GM12878 (cell line): ENCODE measurements at regions of chr17 and their contacts with region 1.

Region 1: DNA sequence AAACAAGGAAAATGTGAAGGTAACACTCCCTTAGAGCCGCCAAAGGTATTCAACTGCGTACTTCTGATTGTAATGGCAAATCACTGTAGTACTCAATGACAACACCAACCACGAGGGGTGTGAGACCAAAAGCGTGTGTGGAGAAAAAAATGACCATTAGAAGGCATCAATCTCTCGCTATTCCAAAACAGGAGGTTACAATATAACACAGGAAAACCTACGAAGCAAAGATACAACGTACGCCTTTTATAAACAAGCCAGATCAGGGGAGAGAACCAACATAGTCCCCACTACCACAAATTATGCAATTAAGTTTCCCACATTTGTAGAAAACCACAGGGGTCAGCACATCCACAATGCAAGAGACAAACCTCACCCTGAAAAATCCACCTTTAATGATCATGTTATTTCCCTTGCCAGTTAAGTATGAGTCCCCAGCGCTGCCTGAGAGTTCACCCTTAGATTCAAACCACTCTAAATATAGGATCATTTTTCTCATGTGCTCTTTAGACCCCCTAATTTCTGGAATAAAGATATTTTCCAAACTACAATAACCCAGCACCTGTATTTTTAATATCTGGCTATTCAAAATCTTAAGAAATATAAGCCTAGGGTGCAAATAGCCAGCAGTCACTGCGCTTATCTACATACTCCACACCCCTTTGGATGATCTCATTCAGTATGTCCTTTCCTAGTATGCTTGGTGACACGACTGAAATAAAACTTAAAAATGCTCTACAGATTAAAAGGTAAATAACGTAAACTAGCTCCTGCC is 12.4 kb downstream of the TEX14 start:
- DNase-seq: peak; percentile 89
- ATAC-seq: peak; percentile 91
- H3K4me3 ChIP-seq: no peak overlapping the region
- H3K27ac ChIP-seq: 0 out of 2 replicates have a peak overlapping the region, but pooled peaks have one; percentile 33
- H3K4me1 ChIP-seq: peaks cover 11% of the 10 kb centered on the region
- H3K27me3 ChIP-seq: no peaks in the 10 kb centered on the region
- CTCF ChIP-seq: no peak
- EP300 ChIP-seq: peak in 1 of 2 experiments; percentile 64; a peak in 1 of 4 replicates
- POLR2A ChIP-seq: peak; percentile 94
- RAD21 ChIP-seq: no peak

Region 2: GRCh38 chr17:58624751-58625150 is 54.7 kb before region 1 on chr17:
- CTCF ChIA-PET with region 1: no interaction called
- POLR2A ChIA-PET with region 1: no interaction called
- RAD21 ChIA-PET with region 1: no interaction called
- SMC1A ChIA-PET with region 1: no interaction called
- in situ Hi-C with region 1: no loop called
- intact Hi-C with region 1: no loop called
- DNase-seq: no peak
- ATAC-seq: no peak
- H3K4me3 ChIP-seq: no peak overlapping the region; the same call in 1 of the 2 replicates
- H3K27ac ChIP-seq: no peak overlapping the region
- H3K4me1 ChIP-seq: peaks cover 28% of the 10 kb centered on the region
- H3K27me3 ChIP-seq: no peaks in the 10 kb centered on the region
- CTCF ChIP-seq: no peak
- EP300 ChIP-seq: no peak
- POLR2A ChIP-seq: no peak
- RAD21 ChIP-seq: no peak

Region 3: DNA sequence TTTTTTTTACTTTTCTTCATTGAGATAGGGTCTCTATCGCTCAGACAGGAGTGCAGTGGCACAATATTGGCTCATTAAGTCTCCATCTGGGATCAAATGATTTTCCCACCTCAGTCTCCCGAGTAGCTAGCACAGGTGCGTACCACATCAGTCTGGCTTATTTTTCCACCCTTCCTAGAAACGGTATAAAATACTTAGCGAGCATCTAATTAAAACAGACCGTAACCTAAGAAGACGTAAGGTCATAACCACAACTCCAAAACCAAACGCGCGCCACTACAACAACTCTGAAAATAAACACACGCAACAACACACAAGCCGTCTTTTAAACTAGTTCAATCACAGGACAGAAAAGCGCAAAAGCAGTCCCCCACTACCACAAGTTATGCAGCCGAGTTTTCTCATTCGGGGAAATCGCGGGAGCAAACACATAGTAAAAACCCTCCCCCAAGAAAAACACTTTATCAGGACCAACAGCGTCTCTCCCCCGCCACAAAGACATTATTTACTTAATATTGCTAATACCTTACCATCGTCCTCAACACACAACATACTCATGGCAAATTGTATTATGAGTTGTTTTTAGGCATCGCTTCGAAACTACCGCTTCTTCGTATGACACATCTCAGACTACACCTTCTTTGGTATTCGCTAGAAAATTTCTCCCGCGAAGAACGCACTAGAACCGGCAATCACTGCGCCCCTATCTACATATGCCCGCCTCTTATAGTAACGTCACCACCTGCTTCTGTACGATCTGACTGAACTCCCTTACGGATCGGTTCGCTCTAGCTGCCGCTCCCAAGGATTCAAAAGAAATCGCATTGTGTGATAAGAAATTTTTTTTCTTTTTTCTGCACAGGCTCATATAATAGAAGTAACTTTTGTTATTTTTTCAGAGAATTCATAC is 20.4 kb before region 1 on chr17:
- CTCF ChIA-PET with region 1: no interaction called
- POLR2A ChIA-PET with region 1: interaction called, 6 read pairs
- RAD21 ChIA-PET with region 1: no interaction called
- SMC1A ChIA-PET with region 1: no interaction called
- in situ Hi-C with region 1: no loop called
- intact Hi-C with region 1: loop called (anchors 1 kb)
- DNase-seq: peak; percentile 95
- ATAC-seq: peak; percentile 93
- H3K4me3 ChIP-seq: peak overlapping the region; percentile 44; the same call in 1 of the 2 replicates
- H3K27ac ChIP-seq: peak overlapping the region; percentile 77
- H3K4me1 ChIP-seq: no peaks in the 10 kb centered on the region
- H3K27me3 ChIP-seq: no peaks in the 10 kb centered on the region
- CTCF ChIP-seq: no peak
- EP300 ChIP-seq: no peak; a peak in 1 of 4 replicates
- POLR2A ChIP-seq: peak; percentile 98
- RAD21 ChIP-seq: peak; percentile 5; the same call in 1 of the 2 replicates

Region 4: DNA sequence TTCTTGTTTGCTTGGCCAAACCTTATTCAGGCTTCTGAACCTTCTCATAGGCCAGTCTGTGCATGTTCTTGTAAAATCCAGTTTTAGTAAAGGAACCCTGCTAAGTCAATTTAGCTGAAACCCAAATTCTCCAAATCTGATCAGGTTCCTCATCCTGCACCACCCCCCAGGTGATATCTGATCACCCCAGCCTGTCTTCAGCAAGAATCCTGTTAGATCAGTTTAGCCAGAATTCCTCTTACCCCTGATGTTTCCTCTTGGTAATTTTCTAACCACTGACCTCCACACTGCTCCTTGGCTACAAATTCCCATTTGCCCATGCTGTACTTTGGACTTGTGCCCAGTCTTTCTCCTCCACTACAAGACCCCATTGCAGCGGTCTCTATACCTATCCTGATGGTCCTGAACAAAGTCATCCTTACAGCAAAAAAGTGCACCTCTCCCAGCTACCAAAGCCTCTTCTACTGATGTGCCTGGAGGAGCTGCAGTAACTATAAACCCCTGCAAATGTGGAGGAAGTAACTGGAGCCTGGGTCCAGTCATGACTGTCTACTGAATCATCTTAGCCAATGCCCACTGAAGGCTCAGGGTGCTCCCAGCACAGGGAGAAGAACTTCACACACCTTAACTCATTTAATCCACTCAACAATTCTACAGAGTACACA is 11.4 kb before region 1 on chr17:
- CTCF ChIA-PET with region 1: interaction called, 3 read pairs
- POLR2A ChIA-PET with region 1: interaction called, 5 read pairs
- RAD21 ChIA-PET with region 1: no interaction called
- SMC1A ChIA-PET with region 1: interaction called, 12 read pairs
- in situ Hi-C with region 1: no loop called
- intact Hi-C with region 1: no loop called
- DNase-seq: no peak
- ATAC-seq: no peak
- H3K4me3 ChIP-seq: no peak overlapping the region
- H3K27ac ChIP-seq: no peak overlapping the region
- H3K4me1 ChIP-seq: no peaks in the 10 kb centered on the region
- H3K27me3 ChIP-seq: no peaks in the 10 kb centered on the region
- CTCF ChIP-seq: no peak
- EP300 ChIP-seq: no peak
- POLR2A ChIP-seq: no peak
- RAD21 ChIP-seq: no peak

Region 5: DNA sequence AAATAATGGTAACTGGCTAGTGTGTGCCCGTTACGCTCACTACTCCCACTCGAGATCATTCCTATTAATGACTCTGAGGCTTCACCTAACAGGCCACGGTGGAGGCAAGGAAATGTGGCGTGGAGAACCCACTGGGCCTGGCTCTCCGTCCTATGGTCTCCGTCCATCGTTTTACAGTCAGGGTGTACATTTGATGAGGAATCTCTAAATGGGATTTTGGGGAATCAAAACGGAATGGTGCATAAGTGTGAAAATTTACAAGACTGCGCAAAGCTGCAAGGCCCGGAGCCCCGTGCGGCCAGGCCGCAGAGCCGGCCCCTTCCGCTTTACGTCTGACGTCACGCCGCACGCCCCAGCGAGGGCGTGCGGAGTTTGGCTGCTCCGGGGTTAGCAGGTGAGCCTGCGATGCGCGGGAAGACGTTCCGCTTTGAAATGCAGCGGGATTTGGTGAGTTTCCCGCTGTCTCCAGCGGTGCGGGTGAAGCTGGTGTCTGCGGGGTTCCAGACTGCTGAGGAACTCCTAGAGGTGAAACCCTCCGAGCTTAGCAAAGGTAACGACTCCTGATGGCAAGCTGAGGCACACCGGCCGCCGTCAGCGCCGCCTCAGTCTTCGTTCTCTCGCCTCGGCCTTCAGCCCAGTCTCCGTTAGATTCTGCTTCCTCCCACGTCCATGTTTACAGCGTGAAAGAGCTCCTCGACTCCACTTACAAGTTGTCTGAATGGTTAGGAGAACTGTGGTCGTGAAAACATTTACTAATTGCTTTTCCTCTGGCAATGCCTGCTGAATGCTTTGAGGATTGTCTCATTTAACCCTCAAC is 13.0 kb after region 1 on chr17 and contains the start of gene RAD51C:
- CTCF ChIA-PET with region 1: interaction called, 5 read pairs
- POLR2A ChIA-PET with region 1: interaction called, 4 read pairs
- RAD21 ChIA-PET with region 1: interaction called, 6 read pairs
- SMC1A ChIA-PET with region 1: interaction called, 17 read pairs
- in situ Hi-C with region 1: no loop called
- intact Hi-C with region 1: no loop called
- DNase-seq: peak; percentile 67
- ATAC-seq: peak; percentile 98
- H3K4me3 ChIP-seq: peak within 1 kb of the TSS; percentile 66
- H3K27ac ChIP-seq: peak within 1 kb of the TSS; percentile 96
- H3K4me1 ChIP-seq: no peaks in the 10 kb centered on the region; the same call in none of the 2 replicates
- H3K27me3 ChIP-seq: no peaks in the 10 kb centered on the region
- CTCF ChIP-seq: no peak
- EP300 ChIP-seq: no peak; a peak in 1 of 4 replicates
- POLR2A ChIP-seq: peak; percentile 87
- RAD21 ChIP-seq: no peak
- polyA plus RNA-seq, gene RAD51C: 229 to 240 TPM

Region 6: GRCh38 chr17:58703137-58703972 is 23.9 kb after region 1 on chr17:
- CTCF ChIA-PET with region 1: interaction called, 4 read pairs
- POLR2A ChIA-PET with region 1: interaction called, 6 read pairs
- RAD21 ChIA-PET with region 1: interaction called, 6 read pairs
- SMC1A ChIA-PET with region 1: interaction called, 9 read pairs
- in situ Hi-C with region 1: no loop called
- intact Hi-C with region 1: loop called (anchors 2 kb)
- DNase-seq: no peak
- ATAC-seq: 0 out of 3 replicates have a peak, but pooled peaks have one; percentile 3
- H3K4me3 ChIP-seq: no peak overlapping the region
- H3K27ac ChIP-seq: peak overlapping the region; percentile 78; the same call in 1 of the 2 replicates
- H3K4me1 ChIP-seq: peaks cover 41% of the 10 kb centered on the region
- H3K27me3 ChIP-seq: no peaks in the 10 kb centered on the region
- CTCF ChIP-seq: no peak
- EP300 ChIP-seq: no peak
- POLR2A ChIP-seq: no peak
- RAD21 ChIP-seq: no peak